ENCODE measurements at regions of chr16 and their contacts with region 1.

Region 1: GRCh38 chr16:79089735-79090284 is 510.7 kb downstream of the MAF start:
- DNase-seq: peak; percentile 66
- H3K4me3 Mint-ChIP-seq: peak overlapping the region; percentile 62
- H3K27ac Mint-ChIP-seq: peak overlapping the region; percentile 95
- H3K4me1 Mint-ChIP-seq: peaks cover 53% of the 10 kb centered on the region
- H3K27me3 Mint-ChIP-seq: no peaks in the 10 kb centered on the region

Region 2: GRCh38 chr16:78892951-78893733 is 196.7 kb before region 1 on chr16:
- intact Hi-C with region 1: loop called (anchors 5 kb)
- DNase-seq: no peak
- H3K4me3 Mint-ChIP-seq: no peak overlapping the region
- H3K27ac Mint-ChIP-seq: peak overlapping the region; percentile 84
- H3K4me1 Mint-ChIP-seq: peaks cover 55% of the 10 kb centered on the region
- H3K27me3 Mint-ChIP-seq: no peaks in the 10 kb centered on the region

Region 3: DNA sequence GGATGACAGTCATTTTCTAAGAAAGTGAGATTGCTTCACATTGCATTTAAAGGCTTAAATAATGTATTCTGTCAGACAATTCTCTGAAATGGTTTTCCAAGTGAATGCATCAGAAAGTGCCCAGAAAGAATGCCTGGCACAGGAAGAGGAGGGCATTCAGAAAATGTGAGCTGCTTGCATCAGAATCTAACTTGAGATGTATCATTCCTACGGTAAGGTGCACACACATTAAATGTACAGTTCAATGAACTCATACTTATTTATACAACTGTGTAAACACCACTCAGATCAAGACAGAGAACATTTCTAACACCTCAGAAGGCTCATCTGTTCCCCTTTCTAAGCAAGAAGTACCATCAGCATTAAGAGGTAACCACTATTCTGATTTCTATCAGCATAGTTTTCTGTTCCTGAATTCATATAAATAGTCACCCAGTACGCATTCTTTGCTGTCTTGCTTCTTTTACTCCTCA is 127.3 kb before region 1 on chr16:
- intact Hi-C with region 1: loop called (anchors 5 kb)
- DNase-seq: no peak
- H3K4me3 Mint-ChIP-seq: no peak overlapping the region
- H3K27ac Mint-ChIP-seq: peak overlapping the region; percentile 53
- H3K4me1 Mint-ChIP-seq: peaks cover 9% of the 10 kb centered on the region
- H3K27me3 Mint-ChIP-seq: peaks cover 2% of the 10 kb centered on the region

Region 4: DNA sequence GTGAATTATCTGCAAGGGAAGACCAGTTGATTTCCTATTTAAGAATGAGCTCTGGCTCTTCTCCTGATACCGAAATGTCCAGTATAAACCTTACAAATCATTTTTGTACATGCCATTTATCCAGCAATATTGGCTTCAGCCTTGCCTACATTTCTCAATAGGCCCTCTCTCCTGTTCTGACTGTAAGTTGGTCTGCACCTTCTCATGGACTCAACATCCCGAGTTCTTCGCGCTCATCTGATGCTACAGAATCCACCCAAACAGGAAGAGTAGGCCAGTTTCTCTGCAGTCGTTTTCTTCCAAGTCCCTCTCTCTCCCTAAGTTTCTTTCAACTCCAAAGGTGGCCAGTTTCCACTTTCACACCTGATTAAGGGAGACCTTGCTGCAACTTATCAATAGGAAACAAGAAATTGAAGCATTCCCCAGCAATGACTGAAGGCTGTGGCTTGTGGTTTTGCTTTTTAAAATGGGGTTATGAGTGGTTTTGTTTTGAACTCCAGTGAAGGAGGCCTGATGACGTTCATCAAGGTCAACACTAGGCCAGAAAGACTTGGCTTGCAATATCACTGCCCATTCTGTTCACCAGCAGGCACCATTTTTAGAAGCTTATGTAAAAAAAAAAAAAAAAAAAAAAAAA is 127.7 kb after region 1 on chr16:
- intact Hi-C with region 1: loop called (anchors 1 kb)
- DNase-seq: peak; percentile 19
- H3K4me3 Mint-ChIP-seq: no peak overlapping the region
- H3K27ac Mint-ChIP-seq: no peak overlapping the region
- H3K4me1 Mint-ChIP-seq: peaks cover 19% of the 10 kb centered on the region
- H3K27me3 Mint-ChIP-seq: no peaks in the 10 kb centered on the region

Measured in activated T-helper 1 cell treated with anti-CD3 and anti-CD28 coated beads, Interleukin-12 subunit alpha, Interleukin-12 subunit beta, Interleukin-2, Interleukin-4 antibody, amounts not matched to agents 30 ng/mL and 10 ng/mL and 1 ng/mL, durations not matched to agents 14 hours and 24 hours and 36 hours (primary cell).